Activated CD8-positive, alpha-beta T cell treated with anti-CD3 and anti-CD28 coated beads for 36 hours (primary cell): ENCODE measurements at regions of chr3 and their contacts with region 1.

Region 1: GRCh38 chr3:53114011-53114400 is 16.2 kb downstream of the RFT1 start:
- DNase-seq: peak; percentile 94
- ATAC-seq: peak; percentile 57
- H3K4me3 Mint-ChIP-seq: no peak overlapping the region
- H3K27ac Mint-ChIP-seq: no peak overlapping the region
- H3K4me1 Mint-ChIP-seq: peaks cover 16% of the 10 kb centered on the region
- H3K27me3 Mint-ChIP-seq: no peaks in the 10 kb centered on the region
- CTCF ChIP-seq: peak; percentile 89

Region 2: DNA sequence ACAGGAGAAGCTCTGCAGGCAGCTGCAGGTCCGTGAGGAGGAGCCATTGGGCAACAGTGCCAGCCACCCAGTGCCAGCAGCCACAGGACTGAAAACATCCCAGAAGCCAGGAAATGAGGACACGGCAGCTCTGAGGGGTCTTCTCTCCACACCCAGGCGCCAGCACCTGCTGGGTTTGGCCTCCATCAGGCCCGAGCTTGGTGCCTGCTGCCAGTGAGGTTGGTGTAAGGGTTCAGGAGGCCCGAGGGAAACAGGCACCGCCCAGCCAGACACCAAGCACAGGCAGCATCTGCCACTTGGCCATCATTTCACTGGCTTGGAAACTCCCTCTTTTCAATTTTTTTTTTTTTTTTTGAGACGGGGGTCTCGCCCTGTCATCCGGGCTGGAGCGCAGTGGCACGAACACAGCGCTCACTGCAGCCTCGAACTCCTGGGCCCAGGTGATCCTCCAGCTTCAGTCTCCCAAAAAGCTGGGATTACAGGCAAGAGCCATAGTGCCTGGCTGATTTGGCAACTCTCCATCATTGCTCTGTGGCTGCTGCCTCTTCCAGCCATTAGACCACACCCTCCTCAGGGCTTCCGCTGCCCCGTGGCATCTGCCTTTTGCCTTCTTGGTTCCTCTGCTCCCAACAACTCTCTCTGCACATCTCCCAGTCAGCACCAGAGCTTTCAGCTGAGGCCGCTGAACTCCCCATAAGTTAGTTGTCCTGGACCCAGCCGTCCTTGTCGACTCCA is 320.9 kb before region 1 on chr3:
- CTCF ChIA-PET with region 1: no interaction called
- POLR2A ChIA-PET with region 1: no interaction called
- intact Hi-C with region 1: no loop called
- DNase-seq: no peak
- ATAC-seq: no peak
- H3K4me3 Mint-ChIP-seq: no peak overlapping the region
- H3K27ac Mint-ChIP-seq: no peak overlapping the region
- H3K4me1 Mint-ChIP-seq: no peaks in the 10 kb centered on the region
- H3K27me3 Mint-ChIP-seq: no peaks in the 10 kb centered on the region
- CTCF ChIP-seq: no peak

Region 3: GRCh38 chr3:52986938-52987337 is 127.1 kb before region 1 on chr3:
- CTCF ChIA-PET with region 1: no interaction called
- POLR2A ChIA-PET with region 1: no interaction called
- intact Hi-C with region 1: no loop called
- DNase-seq: no peak
- ATAC-seq: no peak
- H3K4me3 Mint-ChIP-seq: no peak overlapping the region
- H3K27ac Mint-ChIP-seq: no peak overlapping the region
- H3K4me1 Mint-ChIP-seq: peaks cover 44% of the 10 kb centered on the region
- H3K27me3 Mint-ChIP-seq: no peaks in the 10 kb centered on the region
- CTCF ChIP-seq: peak; percentile 30

Region 4: DNA sequence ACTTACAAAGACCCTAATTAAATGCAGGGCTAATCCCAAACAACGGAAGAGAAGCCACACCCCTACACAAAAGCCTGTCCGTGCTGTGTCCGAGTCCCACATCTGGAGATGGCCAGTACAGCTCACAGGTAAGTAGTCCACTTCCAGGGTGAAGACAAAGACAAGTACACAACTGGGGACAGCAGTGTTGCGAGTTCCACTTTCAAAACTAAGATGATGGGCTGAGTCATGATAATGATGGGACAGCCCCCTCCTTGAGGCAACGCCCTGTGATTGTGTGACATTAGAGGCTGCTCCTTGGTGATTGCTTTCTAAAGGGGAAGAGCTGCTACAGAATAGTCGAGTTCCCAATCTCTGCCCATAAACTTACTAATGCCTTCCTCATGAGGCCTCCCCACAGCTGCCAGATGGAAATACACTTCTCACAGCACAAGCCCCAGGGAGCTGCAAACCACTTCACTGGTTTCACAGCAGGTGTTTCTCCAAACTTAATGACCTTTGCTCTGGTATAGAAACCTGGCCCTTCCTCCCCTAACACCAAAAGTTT is 11.3 kb before region 1 on chr3:
- CTCF ChIA-PET with region 1: interaction called, 18 read pairs
- POLR2A ChIA-PET with region 1: interaction called, 4 read pairs
- intact Hi-C with region 1: no loop called
- DNase-seq: peak; percentile 81
- ATAC-seq: peak; percentile 94
- H3K4me3 Mint-ChIP-seq: peak overlapping the region; percentile 37
- H3K27ac Mint-ChIP-seq: peak overlapping the region; percentile 89
- H3K4me1 Mint-ChIP-seq: peaks cover 68% of the 10 kb centered on the region
- H3K27me3 Mint-ChIP-seq: no peaks in the 10 kb centered on the region
- CTCF ChIP-seq: no peak

Region 5: GRCh38 chr3:53195602-53196574 is 81.9 kb after region 1 on chr3:
- CTCF ChIA-PET with region 1: interaction called, 69 read pairs
- POLR2A ChIA-PET with region 1: interaction called, 7 read pairs
- intact Hi-C with region 1: loop called (anchors 5 kb)
- DNase-seq: peak; percentile 67
- ATAC-seq: peak; percentile 74
- H3K4me3 Mint-ChIP-seq: no peak overlapping the region
- H3K27ac Mint-ChIP-seq: no peak overlapping the region
- H3K4me1 Mint-ChIP-seq: peaks cover 8% of the 10 kb centered on the region
- H3K27me3 Mint-ChIP-seq: peaks cover 1% of the 10 kb centered on the region
- CTCF ChIP-seq: peak; percentile 99